Heart left ventricle (tissue), 16 donors: ENCODE measurements at regions of chrX and their contacts with region 1.

Region 1: DNA sequence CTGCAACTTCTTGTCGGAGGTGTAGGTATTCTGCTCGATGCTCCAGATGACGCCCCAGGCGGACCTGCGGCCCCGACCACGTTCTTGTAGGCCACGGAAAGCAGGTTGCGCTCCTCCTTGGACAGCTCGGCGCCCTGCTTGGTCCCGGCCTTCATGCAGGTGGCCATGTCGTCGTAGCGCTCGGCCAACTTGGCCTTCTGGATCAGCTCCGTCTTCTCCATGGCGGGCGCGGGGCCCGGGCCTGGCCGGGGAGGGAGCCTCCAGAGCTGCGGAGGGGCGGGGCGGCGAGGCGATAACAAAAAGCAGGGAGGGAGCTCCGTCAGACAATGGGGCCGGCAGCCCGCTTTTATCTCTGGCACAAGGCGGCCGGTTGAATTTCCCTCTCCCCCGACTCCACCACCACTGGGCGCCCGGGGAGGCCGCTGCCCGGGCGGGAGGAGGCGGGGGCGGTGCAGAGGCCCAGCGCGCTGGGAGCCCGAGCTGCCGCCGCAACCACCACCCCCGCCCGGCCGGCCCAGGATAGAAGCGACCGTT is 28.3 kb upstream of the DRP2 start:
- DNase-seq: peak in 4 of 5 donors; percentile 7 to 29 (median 20)
- ATAC-seq: peak in 3 of 4 donors; percentile 22 to 78 (median 67)
- H3K4me3 ChIP-seq: peak overlapping the region in 9 of 12 donors; percentile 14 to 41 (median 33)
- H3K27ac ChIP-seq: peak overlapping the region in 1 of 12 donors; percentile 68
- H3K4me1 ChIP-seq: no peaks in the 10 kb centered on the region
- H3K27me3 ChIP-seq: peaks cover 0 to 27% (median 0%) of the 10 kb centered on the region in 9 donors
- CTCF ChIP-seq: no peak
- POLR2A ChIP-seq: no peak

Region 2: GRCh38 chrX:101257448-101258258 is 66.4 kb after region 1 on chrX:
- intact Hi-C with region 1: loop called in 1 of 10 experiments (anchors 10 kb)
- DNase-seq: no peak
- ATAC-seq: no peak
- H3K4me3 ChIP-seq: no peak overlapping the region
- H3K27ac ChIP-seq: no peak overlapping the region
- H3K4me1 ChIP-seq: no peaks in the 10 kb centered on the region
- H3K27me3 ChIP-seq: peaks cover 0 to 17% (median 0%) of the 10 kb centered on the region in 9 donors
- CTCF ChIP-seq: no peak
- POLR2A ChIP-seq: no peak

Region 3: GRCh38 chrX:101493225-101493624 is 301.9 kb after region 1 on chrX:
- intact Hi-C with region 1: no loop called
- DNase-seq: no peak
- ATAC-seq: no peak
- H3K4me3 ChIP-seq: no peak overlapping the region
- H3K27ac ChIP-seq: no peak overlapping the region
- H3K4me1 ChIP-seq: no peaks in the 10 kb centered on the region
- H3K27me3 ChIP-seq: no peaks in the 10 kb centered on the region
- CTCF ChIP-seq: no peak
- POLR2A ChIP-seq: no peak